ENCODE measurements at regions of chr10 and their contacts with region 1.

Region 1: GRCh38 chr10:92517034-92517655 is 56.7 kb downstream of the IDE start:
- DNase-seq: peak; percentile 18 to 74 (median 64)
- ATAC-seq: peak; percentile 98
- H3K4me3 ChIP-seq: no peak overlapping the region
- H3K4me3 Mint-ChIP-seq: no peak overlapping the region
- H3K27ac ChIP-seq: no peak overlapping the region
- H3K27ac Mint-ChIP-seq: peak overlapping the region in 3 of 9 donors; percentile 46 to 64 (median 54)
- H3K4me1 ChIP-seq: peaks cover 0 to 7% of the 10 kb centered on the region in 2 donors
- H3K4me1 Mint-ChIP-seq: peaks cover 7 to 9% (median 8%) of the 10 kb centered on the region in 7 donors
- H3K27me3 ChIP-seq: no peaks in the 10 kb centered on the region
- H3K27me3 Mint-ChIP-seq: no peaks in the 10 kb centered on the region

Region 2: GRCh38 chr10:92573798-92574547 is 56.8 kb after region 1 on chr10 and contains the start of gene IDE:
- CTCF ChIA-PET with region 1: interaction called, 61 read pairs
- POLR2A ChIA-PET with region 1: interaction called, 12 read pairs
- intact Hi-C with region 1: loop called (anchors 1 kb)
- DNase-seq: peak; percentile 70 to 89 (median 77)
- ATAC-seq: peak; percentile 88
- H3K4me3 ChIP-seq: peak within 1 kb of the TSS; percentile 90
- H3K4me3 Mint-ChIP-seq: peak within 1 kb of the TSS; percentile 78 to 94 (median 88)
- H3K27ac ChIP-seq: peak within 1 kb of the TSS; percentile 83
- H3K27ac Mint-ChIP-seq: peak within 1 kb of the TSS; percentile 78 to 95 (median 89)
- H3K4me1 ChIP-seq: peaks cover 12 to 14% of the 10 kb centered on the region in 2 donors
- H3K4me1 Mint-ChIP-seq: peaks cover 27 to 39% (median 38%) of the 10 kb centered on the region in 7 donors
- H3K27me3 ChIP-seq: no peaks in the 10 kb centered on the region
- H3K27me3 Mint-ChIP-seq: no peaks in the 10 kb centered on the region
- total RNA-seq, gene IDE: 20.7 to 36.7 (median 28.4) TPM

Region 3: DNA sequence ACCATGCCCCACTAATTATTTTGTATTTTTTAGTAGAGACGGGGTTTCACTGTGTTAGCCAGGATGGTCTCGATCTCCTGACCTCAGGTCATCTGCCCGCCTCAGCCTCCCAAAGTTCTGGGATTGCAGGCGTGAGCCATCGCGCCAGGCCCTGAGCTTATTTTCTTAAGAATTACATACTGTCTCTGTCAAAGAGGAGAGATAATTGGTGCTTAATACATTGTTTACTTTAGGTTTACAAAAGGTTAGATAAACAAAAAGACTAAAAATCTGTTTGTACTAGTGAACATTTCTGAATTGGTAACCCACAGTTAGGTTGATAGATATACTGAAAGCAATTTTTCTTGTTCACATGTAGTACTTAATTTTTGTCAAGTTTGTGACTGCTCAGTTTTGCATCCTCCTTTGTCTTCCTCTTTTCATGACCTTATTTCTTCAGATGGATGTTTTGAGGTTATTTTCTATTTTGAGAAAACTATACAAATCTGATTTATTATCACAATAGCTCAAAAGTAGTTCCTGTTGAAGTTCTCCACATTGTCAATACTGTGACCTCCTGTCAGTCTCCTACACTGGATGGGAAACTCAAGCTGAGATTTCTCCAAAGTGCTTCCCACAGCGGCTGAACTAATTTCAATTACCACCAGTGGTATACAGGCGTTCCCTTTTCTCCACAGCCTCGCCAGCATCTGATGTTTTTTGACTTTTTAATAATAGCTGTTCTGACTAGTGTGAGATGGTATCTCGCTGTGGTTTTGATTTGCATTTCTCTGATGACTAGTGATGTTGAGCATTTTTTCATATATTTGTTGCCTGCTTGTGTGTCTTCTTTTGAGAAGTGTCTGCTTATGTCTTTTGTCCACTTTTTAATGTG is 195.1 kb after region 1 on chr10:
- CTCF ChIA-PET with region 1: no interaction called
- POLR2A ChIA-PET with region 1: no interaction called
- intact Hi-C with region 1: no loop called
- DNase-seq: no peak
- ATAC-seq: peak; percentile 12
- H3K4me3 ChIP-seq: no peak overlapping the region
- H3K4me3 Mint-ChIP-seq: no peak overlapping the region
- H3K27ac ChIP-seq: no peak overlapping the region
- H3K27ac Mint-ChIP-seq: no peak overlapping the region
- H3K4me1 ChIP-seq: no peaks in the 10 kb centered on the region
- H3K4me1 Mint-ChIP-seq: peaks cover 0 to 3% (median 0%) of the 10 kb centered on the region in 7 donors
- H3K27me3 ChIP-seq: no peaks in the 10 kb centered on the region
- H3K27me3 Mint-ChIP-seq: peaks cover 0 to 31% (median 24%) of the 10 kb centered on the region in 5 donors

Region 4: DNA sequence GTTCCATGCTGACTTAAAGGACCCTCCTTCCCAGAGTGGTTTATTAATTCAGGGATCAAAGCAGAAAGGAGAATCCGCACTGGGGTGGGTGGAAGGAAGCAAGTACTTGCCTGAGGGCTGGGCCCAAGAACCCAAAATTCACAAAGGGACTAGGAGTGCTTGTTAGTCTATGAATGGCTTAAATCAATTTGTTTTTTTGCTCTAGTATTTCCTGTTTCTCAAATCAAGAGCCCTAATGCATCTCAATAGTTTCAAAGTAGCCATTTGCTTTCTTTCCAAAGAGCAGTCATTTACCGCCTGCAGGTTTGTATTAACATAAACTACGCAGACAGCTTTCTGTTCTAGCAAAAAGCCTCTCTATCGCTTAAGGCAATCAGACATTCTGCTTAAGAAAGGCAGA is 1332.4 kb after region 1 on chr10:
- CTCF ChIA-PET with region 1: no interaction called
- POLR2A ChIA-PET with region 1: no interaction called
- intact Hi-C with region 1: no loop called
- DNase-seq: no peak
- ATAC-seq: no peak
- H3K4me3 ChIP-seq: no peak overlapping the region
- H3K4me3 Mint-ChIP-seq: no peak overlapping the region
- H3K27ac ChIP-seq: no peak overlapping the region
- H3K27ac Mint-ChIP-seq: no peak overlapping the region
- H3K4me1 ChIP-seq: no peaks in the 10 kb centered on the region
- H3K4me1 Mint-ChIP-seq: no peaks in the 10 kb centered on the region
- H3K27me3 ChIP-seq: no peaks in the 10 kb centered on the region
- H3K27me3 Mint-ChIP-seq: peaks cover 0 to 4% (median 2%) of the 10 kb centered on the region in 5 donors

Measured in naive thymus-derived CD4-positive, alpha-beta T cell (primary cell).